ENCODE measurements at regions of chr12 and their contacts with region 1.

Region 1: GRCh38 chr12:5003020-5003666 is 40.5 kb upstream of the KCNA5 start:
- DNase-seq: peak; percentile 69 to 79 (median 70)
- ATAC-seq: peak; percentile 96 to 99 (median 98)
- H3K4me3 ChIP-seq: no peak overlapping the region
- H3K27ac ChIP-seq: no peak overlapping the region
- H3K4me1 ChIP-seq: no peaks in the 10 kb centered on the region
- H3K27me3 ChIP-seq: no peaks in the 10 kb centered on the region
- CTCF ChIP-seq: peak; percentile 88 to 93 (median 90)
- POLR2A ChIP-seq: no peak

Region 2: DNA sequence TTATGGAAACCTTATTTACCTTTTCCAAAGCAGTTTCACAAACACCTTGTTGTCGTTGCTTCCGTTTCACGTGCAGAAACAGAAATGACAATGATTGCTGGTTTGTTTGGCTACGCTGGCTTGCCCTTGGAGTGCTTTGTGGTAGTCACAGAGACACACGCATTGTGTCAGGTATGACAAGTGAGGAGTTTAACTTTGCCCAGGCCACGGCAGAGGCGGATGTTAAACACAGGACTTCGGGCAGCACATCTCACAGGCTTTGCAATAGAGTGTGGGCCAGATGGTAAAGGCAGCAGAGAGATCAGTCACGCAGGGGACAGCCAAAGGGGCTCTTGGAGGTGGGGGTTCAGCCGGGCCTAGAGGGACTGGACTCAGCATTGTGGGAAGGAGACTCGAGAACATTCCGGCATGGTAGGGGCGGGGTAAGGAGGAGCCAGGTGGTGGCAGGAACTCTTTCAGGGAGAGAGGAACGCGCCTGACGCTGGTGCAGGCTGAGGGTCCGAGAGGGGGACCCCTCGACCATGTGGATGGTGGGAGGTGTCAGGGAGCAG is 153.3 kb before region 1 on chr12:
- intact Hi-C with region 1: loop called (anchors 5 kb)
- DNase-seq: no peak
- ATAC-seq: no peak
- H3K4me3 ChIP-seq: no peak overlapping the region
- H3K27ac ChIP-seq: no peak overlapping the region
- H3K4me1 ChIP-seq: no peaks in the 10 kb centered on the region
- H3K27me3 ChIP-seq: no peaks in the 10 kb centered on the region
- CTCF ChIP-seq: no peak
- POLR2A ChIP-seq: no peak

Region 3: DNA sequence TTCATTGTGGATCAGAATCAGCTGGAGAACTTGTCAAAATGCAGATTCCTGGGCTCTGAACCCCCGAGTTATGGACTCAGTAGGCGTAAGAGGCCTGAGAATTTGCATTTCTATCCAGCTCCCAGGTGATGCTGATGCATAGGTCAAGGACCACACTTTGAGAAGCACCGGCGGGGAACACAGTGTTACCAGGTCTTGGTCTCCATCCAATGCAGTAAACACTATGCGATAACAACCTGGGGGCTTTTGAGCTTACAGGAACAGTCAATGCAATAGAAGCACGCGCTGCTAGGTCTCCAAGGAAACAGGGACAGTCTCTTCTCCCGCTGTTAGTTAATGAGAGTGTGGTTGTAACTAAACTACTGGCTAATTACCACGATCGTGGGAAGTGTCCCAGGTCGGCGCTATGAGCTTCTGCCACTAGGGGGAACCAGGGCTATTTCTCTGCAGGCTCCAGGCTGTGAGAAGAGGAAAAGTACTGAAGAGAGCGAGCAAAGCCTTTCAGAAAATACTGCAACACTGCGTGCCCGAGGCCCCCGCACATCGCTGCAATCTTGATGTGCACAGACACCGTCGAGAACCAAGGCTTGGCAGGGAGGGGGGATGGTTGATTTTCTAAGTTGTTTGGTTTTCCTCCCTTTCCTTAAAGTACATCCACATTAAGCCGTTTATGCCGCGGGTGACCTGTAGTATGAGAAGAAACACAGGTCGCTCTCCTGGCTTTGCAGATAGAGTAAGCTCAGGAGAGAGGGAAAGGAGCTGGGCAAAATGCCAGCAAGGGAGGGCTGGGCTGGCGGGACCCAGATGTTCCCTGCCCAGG is 145.5 kb before region 1 on chr12:
- intact Hi-C with region 1: loop called (anchors 5 kb)
- DNase-seq: peak; percentile 65 to 71 (median 69)
- ATAC-seq: peak; percentile 78 to 86 (median 84)
- H3K4me3 ChIP-seq: no peak overlapping the region
- H3K27ac ChIP-seq: no peak overlapping the region
- H3K4me1 ChIP-seq: peaks cover 0 to 13% (median 0%) of the 10 kb centered on the region in 4 donors
- H3K27me3 ChIP-seq: no peaks in the 10 kb centered on the region
- CTCF ChIP-seq: peak; percentile 65 to 90 (median 88)
- POLR2A ChIP-seq: no peak